ENCODE measurements at regions of chr5 and their contacts with region 1.

Region 1: DNA sequence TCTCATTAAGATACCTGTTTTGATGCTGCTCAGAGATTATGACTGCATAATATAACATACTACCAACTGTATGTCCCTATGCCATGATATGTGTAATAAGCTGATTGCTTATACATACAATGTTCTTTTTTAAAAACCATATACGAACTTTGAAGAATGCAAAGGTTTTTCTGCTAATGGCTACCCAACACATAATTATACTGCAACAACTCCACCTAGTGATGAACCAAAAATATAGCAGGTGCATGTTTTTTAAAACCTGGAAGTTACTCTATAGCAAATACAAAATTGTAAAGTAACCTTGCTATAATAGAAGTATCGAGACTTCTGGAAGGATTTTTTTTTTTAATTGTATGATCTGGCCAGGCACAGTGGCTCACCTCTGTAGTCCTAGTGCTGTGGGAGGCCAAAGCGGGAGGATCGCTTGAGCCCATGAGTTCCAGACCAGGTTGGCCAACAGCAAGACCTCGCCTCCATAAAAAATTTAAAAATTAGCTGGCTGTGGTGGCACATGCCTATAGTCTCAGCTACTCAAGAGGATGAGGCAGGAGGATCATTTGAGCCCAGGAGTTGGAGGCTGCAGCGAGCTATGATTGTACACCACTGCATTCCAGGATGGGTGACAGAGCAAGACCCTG is 49.1 kb downstream of the HOMER1 start:
- DNase-seq: no peak
- H3K4me3 ChIP-seq: no peak overlapping the region
- H3K27ac ChIP-seq: no peak overlapping the region
- H3K4me1 ChIP-seq: peaks cover 0 to 4% (median 0%) of the 10 kb centered on the region in 3 donors
- H3K27me3 ChIP-seq: no peaks in the 10 kb centered on the region
- CTCF ChIP-seq: peak; percentile 37 to 73 (median 60)
- POLR2A ChIP-seq: no peak

Region 2: DNA sequence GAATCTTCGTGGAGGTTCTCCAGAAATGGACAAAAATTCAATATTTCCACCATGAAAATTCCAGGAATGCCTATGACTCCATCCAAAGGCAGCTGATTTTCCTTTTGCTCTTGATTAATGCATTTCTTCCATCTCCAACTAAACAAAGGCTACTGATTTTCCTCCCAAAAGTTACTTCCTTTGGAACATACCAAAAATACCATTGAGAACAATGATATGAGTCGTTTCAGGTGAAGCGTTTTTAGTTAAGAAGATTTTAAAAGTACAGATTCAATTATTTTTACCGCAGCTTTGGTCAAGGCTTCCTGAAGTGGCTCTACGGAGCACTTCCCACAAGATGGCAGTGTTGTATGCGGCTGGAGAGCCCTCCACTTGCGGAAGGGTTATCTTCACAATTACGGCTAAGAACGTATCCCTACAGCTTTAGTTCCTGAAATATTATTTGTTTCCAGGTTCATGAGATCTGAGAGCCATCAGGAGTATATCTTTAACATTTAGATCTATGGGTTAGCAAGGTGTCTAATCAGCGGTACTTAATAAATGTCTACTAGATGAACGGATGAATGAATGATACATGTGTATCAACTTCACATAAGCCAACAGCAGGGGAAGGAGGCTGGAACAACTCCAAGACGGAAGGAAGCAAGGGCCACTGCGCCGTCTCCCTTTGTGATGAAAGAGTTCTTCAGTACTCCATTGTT is 443.8 kb before region 1 on chr5:
- intact Hi-C with region 1: loop called (anchors 10 kb)
- DNase-seq: no peak
- H3K4me3 ChIP-seq: peak overlapping the region in 3 of 4 donors; percentile 2 to 47 (median 9)
- H3K27ac ChIP-seq: no peak overlapping the region
- H3K4me1 ChIP-seq: peaks cover 0 to 20% (median 10%) of the 10 kb centered on the region in 3 donors
- H3K27me3 ChIP-seq: peaks cover 0 to 5% (median 0%) of the 10 kb centered on the region in 4 donors
- CTCF ChIP-seq: peak; percentile 60 to 74 (median 66)
- POLR2A ChIP-seq: no peak

Region 3: GRCh38 chr5:79133657-79134451 is 331.0 kb before region 1 on chr5:
- intact Hi-C with region 1: loop called (anchors 10 kb)
- DNase-seq: no peak
- H3K4me3 ChIP-seq: peak overlapping the region in 3 of 4 donors; percentile 25 to 56 (median 25)
- H3K27ac ChIP-seq: peak overlapping the region; percentile 10 to 78 (median 73)
- H3K4me1 ChIP-seq: peaks cover 0 to 15% (median 7%) of the 10 kb centered on the region in 3 donors
- H3K27me3 ChIP-seq: no peaks in the 10 kb centered on the region
- CTCF ChIP-seq: peak; percentile 65 to 81 (median 74)
- POLR2A ChIP-seq: no peak

Region 4: DNA sequence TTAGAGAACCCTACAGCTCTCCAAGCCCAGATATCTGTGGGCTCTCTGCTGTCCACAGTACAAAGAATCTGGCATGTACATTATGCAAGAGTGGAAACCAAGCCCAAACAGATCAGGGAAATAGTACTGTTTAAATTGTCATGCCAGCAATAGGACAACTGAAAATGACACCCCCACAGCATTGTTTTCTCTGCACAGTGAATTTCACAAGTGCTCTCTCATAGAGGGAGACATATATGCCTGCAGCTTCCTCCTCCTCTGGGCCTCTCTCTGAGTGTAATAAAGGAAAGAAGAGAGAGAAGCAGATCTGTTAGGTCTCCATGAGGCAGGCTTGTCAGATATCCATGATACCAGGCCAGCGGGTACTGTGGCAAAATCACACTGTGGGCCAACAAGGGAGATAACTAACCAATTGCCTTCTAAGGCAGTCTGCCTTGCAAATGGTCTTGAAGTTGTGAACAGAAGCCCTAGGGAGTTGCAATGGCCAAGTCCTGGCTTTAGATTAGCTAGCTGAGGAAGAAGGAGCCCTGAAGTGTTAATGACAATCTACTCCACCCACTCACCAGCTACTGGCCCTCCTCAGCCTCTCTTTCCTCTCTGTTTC is 283.3 kb before region 1 on chr5:
- intact Hi-C with region 1: no loop called
- DNase-seq: no peak
- H3K4me3 ChIP-seq: no peak overlapping the region
- H3K27ac ChIP-seq: peak overlapping the region in 3 of 4 donors; percentile 1 to 69 (median 55)
- H3K4me1 ChIP-seq: peaks cover 0 to 39% (median 13%) of the 10 kb centered on the region in 3 donors
- H3K27me3 ChIP-seq: no peaks in the 10 kb centered on the region
- CTCF ChIP-seq: no peak
- POLR2A ChIP-seq: no peak

Region 5: GRCh38 chr5:79269733-79270166 is 195.1 kb before region 1 on chr5:
- intact Hi-C with region 1: no loop called
- DNase-seq: no peak
- H3K4me3 ChIP-seq: no peak overlapping the region
- H3K27ac ChIP-seq: no peak overlapping the region
- H3K4me1 ChIP-seq: no peaks in the 10 kb centered on the region
- H3K27me3 ChIP-seq: no peaks in the 10 kb centered on the region
- CTCF ChIP-seq: no peak
- POLR2A ChIP-seq: no peak

Region 6: GRCh38 chr5:79642212-79642611 is 177.4 kb after region 1 on chr5:
- intact Hi-C with region 1: no loop called
- DNase-seq: no peak
- H3K4me3 ChIP-seq: no peak overlapping the region
- H3K27ac ChIP-seq: no peak overlapping the region
- H3K4me1 ChIP-seq: no peaks in the 10 kb centered on the region
- H3K27me3 ChIP-seq: no peaks in the 10 kb centered on the region
- CTCF ChIP-seq: no peak
- POLR2A ChIP-seq: no peak

Region 7: GRCh38 chr5:79924936-79925893 is 460.4 kb after region 1 on chr5:
- intact Hi-C with region 1: no loop called
- DNase-seq: no peak
- H3K4me3 ChIP-seq: no peak overlapping the region
- H3K27ac ChIP-seq: no peak overlapping the region
- H3K4me1 ChIP-seq: no peaks in the 10 kb centered on the region
- H3K27me3 ChIP-seq: no peaks in the 10 kb centered on the region
- CTCF ChIP-seq: peak in 2 of 6 experiments; percentile 28 to 40
- POLR2A ChIP-seq: no peak